Naive thymus-derived CD4-positive, alpha-beta T cell (primary cell): ENCODE measurements at regions of chr7 and their contacts with region 1.

Region 1: DNA sequence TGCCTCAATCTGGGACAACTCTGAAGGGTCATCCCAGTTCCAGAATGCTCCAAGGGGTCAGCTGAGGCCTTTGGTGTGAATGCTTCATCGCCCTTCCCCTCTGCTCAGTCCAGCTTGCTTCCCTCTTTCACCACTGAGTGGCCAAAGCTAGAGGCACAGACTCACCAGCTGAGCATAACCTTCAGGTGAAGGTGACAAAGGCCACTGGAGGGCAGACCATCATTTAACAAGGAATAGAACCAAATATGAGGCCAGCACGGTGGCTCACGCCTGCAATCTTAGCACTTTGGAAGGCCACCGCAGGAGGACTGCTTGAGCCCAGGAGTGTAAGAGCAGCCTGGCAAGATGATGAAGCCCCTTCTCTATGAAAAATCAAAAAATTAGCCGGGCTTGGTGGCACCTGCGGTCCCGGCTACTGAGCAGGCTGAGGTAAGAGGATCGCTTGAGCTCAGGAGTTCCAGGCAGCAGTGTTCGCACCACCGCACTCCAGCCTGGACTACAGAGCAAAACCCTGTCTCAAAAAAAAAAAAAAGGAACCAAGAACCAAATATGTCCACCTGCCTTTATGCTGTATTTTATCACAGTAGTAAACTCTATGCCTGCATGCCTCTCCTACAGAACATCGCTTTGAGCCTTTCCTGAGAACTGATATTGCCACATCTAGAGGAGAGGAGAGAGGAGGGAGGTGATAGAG is 13.4 kb downstream of the PRKAG2 start:
- DNase-seq: no peak
- ATAC-seq: peak; percentile 35
- H3K4me3 ChIP-seq: no peak overlapping the region
- H3K4me3 Mint-ChIP-seq: no peak overlapping the region
- H3K27ac ChIP-seq: no peak overlapping the region
- H3K27ac Mint-ChIP-seq: peak overlapping the region in 2 of 9 donors; percentile 41 to 51
- H3K4me1 ChIP-seq: no peaks in the 10 kb centered on the region
- H3K4me1 Mint-ChIP-seq: peaks cover 0 to 48% (median 42%) of the 10 kb centered on the region in 7 donors
- H3K27me3 ChIP-seq: no peaks in the 10 kb centered on the region
- H3K27me3 Mint-ChIP-seq: no peaks in the 10 kb centered on the region

Region 2: GRCh38 chr7:151992375-151992774 is 128.8 kb after region 1 on chr7:
- CTCF ChIA-PET with region 1: no interaction called
- POLR2A ChIA-PET with region 1: no interaction called
- intact Hi-C with region 1: loop called in 1 of 2 experiments (anchors 1 kb)
- DNase-seq: peak in 8 of 9 donors; percentile 14 to 54 (median 44)
- ATAC-seq: peak; percentile 96
- H3K4me3 ChIP-seq: no peak overlapping the region
- H3K4me3 Mint-ChIP-seq: peak overlapping the region in 3 of 10 donors; percentile 3 to 25 (median 18)
- H3K27ac ChIP-seq: no peak overlapping the region
- H3K27ac Mint-ChIP-seq: peak overlapping the region in 2 of 9 donors; percentile 27 to 55
- H3K4me1 ChIP-seq: no peaks in the 10 kb centered on the region
- H3K4me1 Mint-ChIP-seq: peaks cover 0 to 10% (median 7%) of the 10 kb centered on the region in 7 donors
- H3K27me3 ChIP-seq: no peaks in the 10 kb centered on the region
- H3K27me3 Mint-ChIP-seq: peaks cover 14 to 41% (median 30%) of the 10 kb centered on the region in 5 donors